WTC11 (cell line): ENCODE measurements at regions of chr1 and their contacts with region 1.

Region 1: DNA sequence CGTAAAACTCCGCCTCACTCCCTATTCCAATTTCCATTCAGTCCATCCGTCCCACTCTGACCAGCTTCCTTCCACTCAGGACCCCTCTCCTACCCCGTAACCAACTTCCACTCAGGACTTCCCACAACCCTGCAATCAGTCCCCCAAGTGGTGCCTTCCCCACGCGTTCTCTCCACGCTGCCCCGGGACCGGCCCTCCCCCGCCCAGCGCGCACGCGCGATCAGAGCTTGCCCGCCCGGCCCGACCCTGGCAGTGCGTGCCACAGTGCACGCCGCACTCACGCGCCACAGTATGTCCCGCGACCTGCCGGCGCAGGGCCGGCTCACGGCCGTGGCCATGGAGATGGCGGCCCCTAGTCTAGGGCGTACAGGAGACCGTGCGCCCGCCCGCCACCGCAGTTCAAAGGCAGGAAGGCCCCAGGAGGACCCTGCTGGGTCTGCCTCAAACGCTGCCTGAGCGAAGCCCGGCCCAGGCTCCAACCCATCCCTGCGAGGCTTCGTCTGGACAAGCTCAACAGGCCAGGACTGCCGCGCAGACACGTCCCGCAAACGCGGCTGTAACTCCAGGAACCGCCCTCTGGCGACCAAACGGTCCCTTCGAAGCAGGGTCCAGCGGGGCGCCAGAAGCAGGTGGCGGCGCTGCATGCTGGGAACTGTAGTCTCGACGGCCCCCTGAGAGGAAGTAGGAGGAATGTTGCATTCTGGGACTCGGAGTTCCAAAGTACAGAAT is at the start of gene NDC1:
- DNase-seq: peak; percentile 93
- ATAC-seq: peak; percentile 95
- H3K4me3 Mint-ChIP-seq: peak within 1 kb of the TSS; percentile 99
- H3K27ac Mint-ChIP-seq: peak within 1 kb of the TSS; percentile 95
- H3K4me1 Mint-ChIP-seq: peaks cover 10% of the 10 kb centered on the region
- H3K27me3 Mint-ChIP-seq: peaks cover 10% of the 10 kb centered on the region
- CTCF ChIP-seq: no peak
- total RNA-seq, gene NDC1: 52.4 to 61.2 TPM (median 54.2 TPM) in 3 replicates

Region 2: DNA sequence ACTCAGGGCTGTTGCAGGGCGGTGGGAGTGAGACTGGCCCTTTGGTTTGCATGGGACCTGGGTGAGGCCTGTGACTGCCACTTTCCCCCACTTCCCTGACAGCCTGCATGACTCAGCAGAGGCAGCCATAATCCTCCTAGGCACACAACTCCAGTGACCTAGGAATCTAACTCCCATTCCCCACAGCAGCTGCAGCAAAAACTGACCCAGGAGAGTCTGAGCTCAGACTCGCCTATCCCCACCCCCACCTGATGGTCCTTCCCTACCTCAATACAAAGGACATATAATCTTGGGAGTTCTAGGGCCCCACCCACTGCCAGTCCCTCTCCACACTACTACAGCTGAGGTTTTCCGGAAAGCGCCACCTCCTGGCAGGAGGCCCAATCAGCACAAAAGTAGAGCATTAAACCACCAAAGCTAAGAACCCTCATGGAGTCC is 26.7 kb before region 1 on chr1:
- CTCF ChIA-PET with region 1: interaction called, 10 read pairs
- POLR2A ChIA-PET with region 1: no interaction called
- DNase-seq: peak; percentile 73
- ATAC-seq: peak; percentile 92
- H3K4me3 Mint-ChIP-seq: no peak overlapping the region
- H3K27ac Mint-ChIP-seq: peak overlapping the region; percentile 22; the same call in 1 of the 2 replicates
- H3K4me1 Mint-ChIP-seq: peaks cover 16% of the 10 kb centered on the region
- H3K27me3 Mint-ChIP-seq: no peaks in the 10 kb centered on the region; the same call in 1 of the 2 replicates
- CTCF ChIP-seq: peak; percentile 41; the same call in 1 of the 2 replicates